Dorsolateral prefrontal cortex (tissue), 120 donors: ENCODE measurements at regions of chr9 and their contacts with region 1.

Region 1: GRCh38 chr9:109320742-109321448 is at the start of gene EPB41L4B:
- DNase-seq: peak; percentile 80 to 91 (median 86)
- H3K4me3 ChIP-seq: peak within 1 kb of the TSS; percentile 27 to 73 (median 58)
- H3K27ac ChIP-seq: peak within 1 kb of the TSS in 19 of 59 donors; percentile 5 to 74 (median 53)
- H3K27me3 ChIP-seq: peaks cover 0 to 8% (median 0%) of the 10 kb centered on the region in 45 donors
- CTCF ChIP-seq: peak; percentile 76 to 99 (median 94)
- total RNA-seq, gene EPB41L4B: 9.2 to 51.1 (median 29.8) TPM

Region 2: GRCh38 chr9:109119439-109120203 is 201.3 kb before region 1 on chr9 and contains the start of gene TMEM245:
- intact Hi-C with region 1: loop called in 1 of 2 experiments (anchors 10 kb)
- DNase-seq: peak; percentile 94 to 99 (median 98)
- H3K4me3 ChIP-seq: peak within 1 kb of the TSS; percentile 66 to 99 (median 89)
- H3K27ac ChIP-seq: peak within 1 kb of the TSS in 57 of 59 donors; percentile 49 to 95 (median 86)
- H3K27me3 ChIP-seq: no peaks in the 10 kb centered on the region
- CTCF ChIP-seq: peak in 37 of 56 donors; percentile 4 to 53 (median 24)
- total RNA-seq, gene TMEM245: 53.4 to 104 (median 72.3) TPM

Region 3: GRCh38 chr9:109166771-109167601 is 153.9 kb before region 1 on chr9 and contains the start of gene FRRS1L:
- intact Hi-C with region 1: loop called in 1 of 2 experiments (anchors 2 kb)
- DNase-seq: peak; percentile 53 to 81 (median 64)
- H3K4me3 ChIP-seq: peak within 1 kb of the TSS; percentile 29 to 72 (median 57)
- H3K27ac ChIP-seq: peak within 1 kb of the TSS in 52 of 59 donors; percentile 6 to 85 (median 72)
- H3K27me3 ChIP-seq: no peaks in the 10 kb centered on the region
- CTCF ChIP-seq: no peak
- total RNA-seq, gene FRRS1L: 42.9 to 221 (median 137) TPM

Region 4: DNA sequence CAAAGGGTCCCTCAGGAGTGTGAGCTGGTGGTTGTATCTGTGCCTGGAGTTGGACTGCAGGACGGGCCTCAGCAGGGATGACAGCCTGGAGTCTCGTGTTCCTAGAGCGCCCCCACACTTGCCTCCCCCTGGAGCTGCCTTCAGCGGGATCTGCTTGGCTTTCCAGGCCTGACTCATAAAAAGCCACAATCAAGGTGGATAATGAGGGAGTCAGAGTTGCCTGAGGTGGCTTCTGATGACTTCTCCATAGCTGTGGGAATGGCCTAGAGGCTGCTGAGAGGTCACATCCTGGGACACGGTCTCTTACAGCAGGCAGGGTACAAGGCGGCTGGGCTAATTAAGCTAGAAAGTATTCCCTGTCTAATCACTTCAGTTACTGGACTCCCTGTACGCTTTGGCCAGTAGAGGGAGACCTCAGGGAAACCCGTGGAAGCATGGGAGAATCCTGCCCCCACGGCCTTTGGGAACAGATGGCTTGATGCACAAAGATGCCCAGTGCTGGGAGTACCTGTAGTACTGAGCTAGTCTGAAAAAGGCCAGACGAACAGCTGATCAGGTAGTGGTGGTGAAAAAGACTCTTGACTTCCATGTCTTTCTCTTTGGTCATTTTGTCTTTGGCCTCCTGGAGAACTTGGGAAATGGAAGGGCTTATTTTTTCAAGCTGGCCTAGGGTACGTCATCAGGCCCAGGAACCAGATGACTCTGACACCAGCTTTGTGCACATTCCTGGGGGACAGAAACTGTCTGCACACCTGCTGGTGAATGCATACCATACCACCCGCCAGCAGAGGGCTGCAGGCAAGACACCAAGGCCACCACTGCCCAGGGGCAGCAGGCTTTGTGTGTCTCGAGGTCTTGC is 137.7 kb before region 1 on chr9:
- intact Hi-C with region 1: loop called in 1 of 2 experiments (anchors 10 kb)
- DNase-seq: peak in 2 of 10 donors; percentile 35 to 84
- H3K4me3 ChIP-seq: no peak overlapping the region
- H3K27ac ChIP-seq: no peak overlapping the region
- H3K27me3 ChIP-seq: no peaks in the 10 kb centered on the region
- CTCF ChIP-seq: peak in 44 of 56 donors; percentile 5 to 52 (median 28)

Region 5: GRCh38 chr9:109244157-109245132 is 76.5 kb before region 1 on chr9:
- intact Hi-C with region 1: loop called (anchors 1 to 2 kb)
- DNase-seq: peak; percentile 63 to 83 (median 78)
- H3K4me3 ChIP-seq: no peak overlapping the region
- H3K27ac ChIP-seq: peak overlapping the region in 6 of 59 donors; percentile 7 to 54 (median 22)
- H3K27me3 ChIP-seq: no peaks in the 10 kb centered on the region
- CTCF ChIP-seq: peak; percentile 60 to 98 (median 94)

Region 6: GRCh38 chr9:109286571-109286977 is 34.3 kb before region 1 on chr9:
- intact Hi-C with region 1: no loop called
- DNase-seq: no peak
- H3K4me3 ChIP-seq: no peak overlapping the region
- H3K27ac ChIP-seq: no peak overlapping the region
- H3K27me3 ChIP-seq: no peaks in the 10 kb centered on the region
- CTCF ChIP-seq: no peak

Region 7: GRCh38 chr9:109401168-109401989 is 80.5 kb after region 1 on chr9:
- intact Hi-C with region 1: loop called in 1 of 2 experiments (anchors 2 kb)
- DNase-seq: peak in 5 of 10 donors; percentile 10 to 56 (median 42)
- H3K4me3 ChIP-seq: no peak overlapping the region
- H3K27ac ChIP-seq: no peak overlapping the region
- H3K27me3 ChIP-seq: peaks cover 0 to 3% (median 0%) of the 10 kb centered on the region in 45 donors
- CTCF ChIP-seq: peak; percentile 39 to 84 (median 70)